Caco-2 (cell line): ENCODE measurements at regions of chr1 and their contacts with region 1.

Region 1: GRCh38 chr1:51296383-51297357 is 33.7 kb downstream of the TTC39A start:
- DNase-seq: peak; percentile 83 to 88
- H3K4me3 ChIP-seq: peak overlapping the region; percentile 20
- H3K4me3 Mint-ChIP-seq: peak overlapping the region; percentile 74
- H3K27ac Mint-ChIP-seq: peak overlapping the region; percentile 88
- H3K4me1 ChIP-seq: peaks cover 10% of the 10 kb centered on the region
- H3K4me1 Mint-ChIP-seq: peaks cover 13% of the 10 kb centered on the region
- H3K27me3 ChIP-seq: no peaks in the 10 kb centered on the region
- H3K27me3 Mint-ChIP-seq: no peaks in the 10 kb centered on the region
- CTCF ChIP-seq: peak; percentile 81 to 87

Region 2: DNA sequence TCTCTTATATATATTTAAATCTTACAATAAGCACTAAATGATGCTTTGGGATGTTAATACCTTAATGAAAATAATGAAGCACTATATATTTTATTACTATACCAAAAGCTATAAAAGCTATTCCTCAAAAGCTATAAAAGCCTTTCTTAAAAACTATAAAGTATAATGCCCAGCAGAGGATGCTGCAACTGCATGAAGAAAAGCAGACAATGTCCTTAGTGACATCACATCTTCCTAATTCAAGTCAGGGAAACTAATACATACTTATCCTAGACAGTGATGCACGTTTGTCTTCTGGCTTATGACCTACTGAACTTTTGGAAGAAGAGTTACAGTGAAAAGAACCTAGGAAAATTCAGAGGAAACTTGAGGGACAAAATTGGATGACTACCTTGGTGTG is 208.2 kb before region 1 on chr1:
- CTCF ChIA-PET with region 1: no interaction called
- POLR2A ChIA-PET with region 1: no interaction called
- intact Hi-C with region 1: loop called (anchors 2 kb)
- DNase-seq: no peak
- H3K4me3 ChIP-seq: no peak overlapping the region
- H3K4me3 Mint-ChIP-seq: no peak overlapping the region
- H3K27ac Mint-ChIP-seq: no peak overlapping the region
- H3K4me1 ChIP-seq: no peaks in the 10 kb centered on the region
- H3K4me1 Mint-ChIP-seq: no peaks in the 10 kb centered on the region
- H3K27me3 ChIP-seq: no peaks in the 10 kb centered on the region
- H3K27me3 Mint-ChIP-seq: peaks cover 27% of the 10 kb centered on the region
- CTCF ChIP-seq: peak in 1 of 2 experiments; percentile 12

Region 3: GRCh38 chr1:51238034-51238403 is 58.7 kb before region 1 on chr1:
- CTCF ChIA-PET with region 1: interaction called, 5 read pairs
- POLR2A ChIA-PET with region 1: no interaction called
- intact Hi-C with region 1: loop called (anchors 1 kb)
- DNase-seq: peak in 1 of 2 experiments; percentile 20
- H3K4me3 ChIP-seq: peak overlapping the region; percentile 69; the same call in 1 of the 2 replicates
- H3K4me3 Mint-ChIP-seq: no peak overlapping the region
- H3K27ac Mint-ChIP-seq: no peak overlapping the region
- H3K4me1 ChIP-seq: no peaks in the 10 kb centered on the region
- H3K4me1 Mint-ChIP-seq: peaks cover 19% of the 10 kb centered on the region
- H3K27me3 ChIP-seq: no peaks in the 10 kb centered on the region
- H3K27me3 Mint-ChIP-seq: no peaks in the 10 kb centered on the region
- CTCF ChIP-seq: no peak